GM12878 (cell line): ENCODE measurements at regions of chr20 and their contacts with region 1.

Region 1: DNA sequence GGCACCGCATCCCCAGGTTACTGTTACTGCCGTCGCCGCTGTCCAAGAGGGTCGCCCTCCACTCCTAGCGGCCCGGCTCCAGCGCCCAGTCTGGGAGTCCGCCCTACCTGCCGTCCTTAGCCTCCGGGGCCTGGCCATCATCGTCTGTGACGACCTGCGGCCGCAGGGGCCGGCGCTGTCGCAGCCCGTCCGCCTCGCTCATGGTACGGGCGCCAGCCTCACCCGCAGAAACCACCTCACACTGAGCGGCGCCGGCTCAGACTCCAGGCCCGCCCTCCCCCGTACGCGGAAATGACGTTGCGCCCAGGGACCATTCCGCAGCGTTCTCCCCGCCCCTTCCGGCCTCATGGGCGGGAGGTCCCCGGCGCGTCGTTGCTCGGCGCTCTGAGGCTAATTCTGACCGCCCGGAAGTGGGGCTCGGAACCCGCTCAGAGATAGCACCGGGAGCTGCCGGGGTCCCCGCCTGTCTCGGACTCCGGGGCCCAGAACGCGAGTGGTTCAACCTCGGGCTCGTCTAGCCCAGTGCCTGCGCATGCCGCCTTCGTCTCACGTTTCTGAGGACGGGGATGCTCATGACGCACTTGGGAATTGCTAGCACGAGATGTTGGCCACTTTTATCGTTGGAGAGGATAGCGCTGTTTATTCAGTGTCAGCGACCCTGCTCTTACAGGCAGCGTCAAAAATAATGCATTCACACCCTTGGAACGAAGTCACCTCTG is at the start of gene APMAP:
- DNase-seq: peak; percentile 66
- ATAC-seq: peak; percentile 93
- H3K4me3 ChIP-seq: peak within 1 kb of the TSS; percentile 87
- H3K27ac ChIP-seq: peak within 1 kb of the TSS; percentile 77
- H3K4me1 ChIP-seq: peaks cover 7% of the 10 kb centered on the region; the same call in 1 of the 2 replicates
- H3K27me3 ChIP-seq: no peaks in the 10 kb centered on the region
- CTCF ChIP-seq: no peak
- EP300 ChIP-seq: 0 out of 4 replicates have a peak, but pooled peaks of 1 of the 2 experiments have one; percentile 39
- POLR2A ChIP-seq: peak; percentile 98
- RAD21 ChIP-seq: no peak
- polyA plus RNA-seq, gene APMAP: 12.1 to 22.3 TPM

Region 2: GRCh38 chr20:25057234-25058050 is 64.8 kb after region 1 on chr20:
- CTCF ChIA-PET with region 1: interaction called, 244 read pairs
- POLR2A ChIA-PET with region 1: interaction called, 6 read pairs
- RAD21 ChIA-PET with region 1: interaction called, 87 read pairs
- SMC1A ChIA-PET with region 1: interaction called, 116 read pairs
- in situ Hi-C with region 1: loop called (anchors 5 kb)
- intact Hi-C with region 1: no loop called
- DNase-seq: no peak
- ATAC-seq: peak; percentile 63
- H3K4me3 ChIP-seq: peak overlapping the region; percentile 83
- H3K27ac ChIP-seq: peak overlapping the region; percentile 86
- H3K4me1 ChIP-seq: peaks cover 44% of the 10 kb centered on the region
- H3K27me3 ChIP-seq: peaks cover 0 to 4% of the 10 kb centered on the region in 2 experiments; a peak in 1 of 4 replicates
- CTCF ChIP-seq: no peak
- EP300 ChIP-seq: peak in 1 of 2 experiments; percentile 20; a peak in 1 of 4 replicates
- POLR2A ChIP-seq: peak; percentile 74
- RAD21 ChIP-seq: no peak

Region 3: GRCh38 chr20:25178563-25179438 is 186.2 kb after region 1 on chr20:
- CTCF ChIA-PET with region 1: interaction called, 13 read pairs
- POLR2A ChIA-PET with region 1: no interaction called
- RAD21 ChIA-PET with region 1: interaction called, 6 read pairs
- SMC1A ChIA-PET with region 1: interaction called, 10 read pairs
- in situ Hi-C with region 1: loop called (anchors 5 kb)
- intact Hi-C with region 1: loop called (anchors 1 kb)
- DNase-seq: no peak
- ATAC-seq: peak; percentile 79
- H3K4me3 ChIP-seq: no peak overlapping the region
- H3K27ac ChIP-seq: no peak overlapping the region
- H3K4me1 ChIP-seq: no peaks in the 10 kb centered on the region
- H3K27me3 ChIP-seq: no peaks in the 10 kb centered on the region
- CTCF ChIP-seq: peak; percentile 77 to 93 (median 84)
- EP300 ChIP-seq: no peak
- POLR2A ChIP-seq: no peak
- RAD21 ChIP-seq: peak; percentile 93

Region 4: GRCh38 chr20:25288266-25289181 is 295.9 kb after region 1 on chr20:
- CTCF ChIA-PET with region 1: no interaction called
- POLR2A ChIA-PET with region 1: no interaction called
- RAD21 ChIA-PET with region 1: no interaction called
- SMC1A ChIA-PET with region 1: no interaction called
- in situ Hi-C with region 1: no loop called
- intact Hi-C with region 1: loop called (anchors 5 kb)
- DNase-seq: peak; percentile 51
- ATAC-seq: peak; percentile 98
- H3K4me3 ChIP-seq: no peak overlapping the region
- H3K27ac ChIP-seq: peak overlapping the region; percentile 52
- H3K4me1 ChIP-seq: peaks cover 15% of the 10 kb centered on the region
- H3K27me3 ChIP-seq: no peaks in the 10 kb centered on the region
- CTCF ChIP-seq: no peak
- EP300 ChIP-seq: peak in 1 of 2 experiments; percentile 82; a peak in 3 of 4 replicates
- POLR2A ChIP-seq: no peak
- RAD21 ChIP-seq: no peak

Region 5: DNA sequence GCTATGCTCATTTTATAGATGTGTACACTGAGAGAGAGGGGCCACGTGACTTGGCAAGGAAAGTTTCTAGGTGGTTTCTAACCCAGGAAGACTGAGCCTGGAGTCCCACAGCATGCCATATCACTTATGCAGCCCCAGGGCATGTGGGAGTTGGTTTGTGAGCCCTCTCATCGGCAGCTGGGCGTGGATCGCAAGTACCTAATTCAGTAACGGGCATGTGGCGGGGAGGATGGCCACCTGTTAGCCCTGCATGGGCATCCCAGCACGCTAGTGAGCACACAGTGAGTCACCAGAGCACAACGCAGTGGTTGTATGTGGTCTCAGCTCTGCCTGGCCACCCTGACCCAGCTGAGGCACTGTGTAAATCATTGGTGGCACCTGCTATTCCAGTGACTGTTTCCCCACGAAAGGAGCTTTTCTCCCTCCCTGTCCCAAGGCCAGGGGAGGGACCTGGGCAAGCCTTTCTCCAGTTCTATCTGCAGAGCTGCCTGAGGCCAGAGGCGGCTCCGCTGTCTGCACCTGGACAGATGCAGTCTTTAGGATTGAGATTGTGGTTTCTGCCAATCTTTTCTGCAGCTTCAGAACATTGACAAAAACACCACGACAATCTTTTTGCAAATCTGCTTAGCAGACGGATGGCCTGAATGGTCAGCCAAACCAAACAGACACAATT is 504.5 kb after region 1 on chr20:
- CTCF ChIA-PET with region 1: no interaction called
- POLR2A ChIA-PET with region 1: no interaction called
- RAD21 ChIA-PET with region 1: no interaction called
- SMC1A ChIA-PET with region 1: no interaction called
- in situ Hi-C with region 1: no loop called
- intact Hi-C with region 1: no loop called
- DNase-seq: no peak
- ATAC-seq: no peak
- H3K4me3 ChIP-seq: no peak overlapping the region
- H3K27ac ChIP-seq: no peak overlapping the region
- H3K4me1 ChIP-seq: no peaks in the 10 kb centered on the region
- H3K27me3 ChIP-seq: no peaks in the 10 kb centered on the region
- CTCF ChIP-seq: no peak
- EP300 ChIP-seq: no peak
- POLR2A ChIP-seq: no peak
- RAD21 ChIP-seq: no peak